CD4-positive, alpha-beta memory T cell (primary cell): ENCODE measurements at regions of chr6 and their contacts with region 1.

Region 1: DNA sequence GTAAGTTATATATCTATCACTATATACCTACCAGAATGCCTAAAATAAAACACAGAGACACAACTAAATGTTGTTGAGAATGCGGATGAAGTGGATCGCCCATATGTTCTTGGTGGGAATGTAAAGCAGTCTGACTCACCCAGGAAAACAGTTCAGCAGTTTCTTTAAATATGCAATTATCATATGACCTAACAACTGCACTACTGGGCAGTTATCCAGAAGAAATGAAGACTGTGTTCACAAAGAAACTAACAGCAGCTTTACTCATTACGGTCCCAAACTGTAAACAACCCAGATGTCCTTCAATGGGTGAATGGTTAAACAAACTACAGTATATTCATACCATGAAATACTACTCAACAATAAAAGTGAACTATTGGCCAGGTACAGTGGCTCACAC is 14.3 kb upstream of the ZC3H12D start:
- DNase-seq: no peak
- H3K4me3 ChIP-seq: no peak overlapping the region
- H3K4me3 Mint-ChIP-seq: no peak overlapping the region
- H3K27ac ChIP-seq: no peak overlapping the region
- H3K27ac Mint-ChIP-seq: peak overlapping the region in 6 of 7 donors; percentile 51 to 96 (median 84)
- H3K4me1 ChIP-seq: peaks cover 52% of the 10 kb centered on the region
- H3K4me1 Mint-ChIP-seq: peaks cover 29 to 61% (median 40%) of the 10 kb centered on the region in 4 donors
- H3K27me3 ChIP-seq: no peaks in the 10 kb centered on the region
- H3K27me3 Mint-ChIP-seq: no peaks in the 10 kb centered on the region

Region 2: DNA sequence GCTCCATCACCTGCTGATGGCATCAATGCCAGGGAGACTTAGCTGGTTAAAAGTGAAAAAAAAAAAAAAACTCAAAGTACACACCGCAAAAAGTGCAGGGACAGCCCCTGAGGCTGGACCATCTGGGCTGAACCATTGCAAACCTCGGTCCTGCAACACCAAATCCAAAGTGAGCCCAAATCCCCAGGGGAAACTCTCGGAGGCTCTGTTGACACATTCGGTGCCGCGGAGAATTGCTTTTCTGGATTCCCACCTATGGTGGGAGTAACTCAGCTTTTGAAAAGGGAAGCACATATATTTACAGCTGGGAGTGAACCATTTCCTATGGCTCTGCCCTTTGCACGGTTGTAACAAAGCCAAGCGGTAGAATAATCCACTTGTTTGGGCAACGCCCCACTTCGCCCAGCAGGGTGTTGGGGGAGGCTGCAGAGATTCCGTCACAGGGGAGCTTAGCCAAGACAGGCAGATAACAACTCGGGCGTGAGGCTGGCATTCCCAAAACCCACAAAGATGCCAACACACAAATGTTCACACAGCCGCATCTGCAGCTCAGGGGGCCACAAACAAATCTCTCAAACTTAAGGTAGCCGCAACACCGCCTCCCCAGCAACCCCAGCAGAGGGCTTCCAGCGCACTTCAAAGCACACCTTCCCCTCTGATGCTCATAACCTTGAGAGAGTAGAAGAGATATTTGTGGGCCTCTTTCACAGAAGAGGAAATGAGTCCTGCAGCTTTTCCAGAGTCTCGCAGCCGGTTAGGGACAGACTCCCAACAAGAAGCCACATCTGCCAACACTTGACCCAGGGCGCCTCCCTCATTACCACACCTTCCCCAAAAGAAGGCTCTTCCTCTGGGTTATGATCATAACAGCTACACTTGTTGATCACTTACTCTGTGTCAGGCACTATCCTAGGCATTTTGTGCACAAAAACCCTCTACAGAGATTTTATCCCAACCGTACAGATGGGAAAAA is 25.7 kb before region 1 on chr6:
- CTCF ChIA-PET with region 1: interaction called, 5 read pairs
- POLR2A ChIA-PET with region 1: interaction called, 11 read pairs
- intact Hi-C with region 1: no loop called
- DNase-seq: peak in 4 of 5 donors; percentile 38 to 58 (median 48)
- H3K4me3 ChIP-seq: no peak overlapping the region
- H3K4me3 Mint-ChIP-seq: peak overlapping the region; percentile 59 to 83 (median 68)
- H3K27ac ChIP-seq: peak overlapping the region; percentile 40
- H3K27ac Mint-ChIP-seq: peak overlapping the region; percentile 84 to 92 (median 88)
- H3K4me1 ChIP-seq: peaks cover 93% of the 10 kb centered on the region
- H3K4me1 Mint-ChIP-seq: peaks cover 49 to 85% (median 71%) of the 10 kb centered on the region in 4 donors
- H3K27me3 ChIP-seq: no peaks in the 10 kb centered on the region
- H3K27me3 Mint-ChIP-seq: no peaks in the 10 kb centered on the region

Region 3: DNA sequence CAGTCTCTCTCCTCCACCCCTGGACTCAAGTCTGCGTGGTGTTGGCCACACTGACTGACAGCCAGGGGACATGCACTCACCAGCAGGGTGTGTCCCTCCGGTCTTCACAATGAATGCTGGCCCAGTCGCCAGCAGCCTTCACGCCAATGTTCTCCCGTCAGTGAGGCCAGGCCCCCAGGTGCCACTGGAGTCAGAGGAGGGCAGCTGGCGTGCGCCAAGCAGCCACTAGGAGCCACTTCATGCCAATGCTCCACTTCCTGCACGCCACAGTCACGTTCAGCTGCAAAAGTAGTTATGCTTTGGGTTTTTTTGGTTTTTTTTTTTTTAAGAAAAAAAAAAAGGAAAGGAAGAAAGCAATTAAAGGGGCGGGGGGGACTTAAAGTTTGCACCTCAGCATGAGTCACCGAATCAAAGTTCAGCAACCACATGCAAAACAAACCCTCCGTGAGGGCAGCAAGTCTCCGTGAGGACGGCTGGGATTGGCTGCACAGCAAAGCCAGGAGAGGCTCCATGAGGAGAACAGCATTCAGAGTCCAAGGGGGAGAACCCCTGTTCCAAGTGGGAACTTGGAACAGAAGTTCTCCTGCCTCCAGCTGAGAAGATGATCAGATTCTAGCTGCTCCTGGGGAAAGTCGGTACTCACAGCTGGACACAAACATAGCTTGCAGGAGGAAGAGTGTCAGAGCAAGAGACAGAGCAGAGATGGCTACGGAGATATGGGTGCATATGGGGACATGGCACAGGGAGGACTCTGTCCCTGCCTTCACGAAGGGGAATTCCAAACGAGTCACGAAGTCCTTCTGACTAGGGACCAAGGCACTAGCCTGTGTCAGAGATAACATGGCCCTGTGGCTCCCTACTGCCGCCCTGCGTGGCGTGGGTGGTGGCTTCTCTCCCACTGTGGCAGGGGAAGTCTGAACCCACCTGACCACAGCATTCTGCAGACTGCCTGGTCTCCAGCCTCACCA is 14.0 kb before region 1 on chr6 and contains the start of gene ZC3H12D:
- CTCF ChIA-PET with region 1: interaction called, 11 read pairs
- POLR2A ChIA-PET with region 1: interaction called, 10 read pairs
- intact Hi-C with region 1: loop called (anchors 1 kb)
- DNase-seq: peak; percentile 83 to 96 (median 89)
- H3K4me3 ChIP-seq: peak within 1 kb of the TSS; percentile 76 to 82
- H3K4me3 Mint-ChIP-seq: peak within 1 kb of the TSS; percentile 90 to 98 (median 94)
- H3K27ac ChIP-seq: peak within 1 kb of the TSS; percentile 99
- H3K27ac Mint-ChIP-seq: peak within 1 kb of the TSS; percentile 98 to 100 (median 100)
- H3K4me1 ChIP-seq: peaks cover 32% of the 10 kb centered on the region
- H3K4me1 Mint-ChIP-seq: peaks cover 25 to 69% (median 38%) of the 10 kb centered on the region in 4 donors
- H3K27me3 ChIP-seq: no peaks in the 10 kb centered on the region
- H3K27me3 Mint-ChIP-seq: no peaks in the 10 kb centered on the region
- total RNA-seq, gene ZC3H12D: 91.5 to 106 TPM